Activated T-helper 1 cell treated with anti-CD3 and anti-CD28 coated beads, Interleukin-12 subunit alpha, Interleukin-12 subunit beta, Interleukin-2, Interleukin-4 antibody, amounts not matched to agents 30 ng/mL and 10 ng/mL and 1 ng/mL, durations not matched to agents 14 hours and 24 hours and 36 hours (primary cell): ENCODE measurements at regions of chr17 and their contacts with region 1.

Region 1: GRCh38 chr17:21551081-21551881 is 141.0 kb upstream of the KCNJ18 start:
- DNase-seq: peak; percentile 66
- H3K4me3 Mint-ChIP-seq: peak overlapping the region; percentile 77
- H3K27ac Mint-ChIP-seq: peak overlapping the region; percentile 64
- H3K4me1 Mint-ChIP-seq: peaks cover 27% of the 10 kb centered on the region
- H3K27me3 Mint-ChIP-seq: peaks cover 29% of the 10 kb centered on the region

Region 2: GRCh38 chr17:21034340-21035235 is 516.7 kb before region 1 on chr17:
- intact Hi-C with region 1: loop called (anchors 2 kb)
- DNase-seq: peak; percentile 46
- H3K4me3 Mint-ChIP-seq: peak overlapping the region; percentile 80
- H3K27ac Mint-ChIP-seq: peak overlapping the region; percentile 93
- H3K4me1 Mint-ChIP-seq: peaks cover 72% of the 10 kb centered on the region
- H3K27me3 Mint-ChIP-seq: no peaks in the 10 kb centered on the region

Region 3: DNA sequence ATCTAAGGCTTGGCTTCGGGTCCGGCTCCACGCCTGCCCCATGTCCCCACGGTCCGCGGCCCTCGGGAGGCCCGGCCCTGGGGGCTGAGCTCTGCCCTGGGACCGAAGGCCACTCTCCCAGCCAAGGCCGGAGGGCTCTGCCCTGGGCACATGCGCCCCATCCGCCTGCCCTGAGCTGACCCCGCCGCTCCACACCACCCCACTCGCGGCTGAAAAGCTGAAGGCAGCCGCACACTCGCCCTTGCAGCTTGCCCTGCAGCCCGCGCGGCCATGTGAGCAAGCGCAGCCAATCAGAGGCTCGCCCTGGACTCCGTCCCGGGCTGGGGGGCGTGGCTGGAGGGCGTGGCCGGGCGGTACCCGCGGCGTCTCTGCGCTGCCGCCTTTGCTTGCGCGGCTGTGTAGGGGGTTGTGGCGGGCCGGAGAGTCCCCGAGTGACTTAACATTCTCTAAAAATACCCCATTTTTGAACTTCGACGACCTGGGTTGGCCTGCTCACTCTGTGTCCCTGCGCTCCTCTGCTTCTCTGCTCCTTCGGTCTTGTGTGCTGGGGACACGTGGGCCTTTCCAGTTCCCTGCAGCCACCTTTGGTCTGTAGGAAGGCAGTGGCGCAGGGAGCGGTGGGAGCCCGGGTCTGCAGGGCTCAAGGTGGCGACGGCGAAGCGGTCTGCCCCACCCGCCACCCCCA is 275.6 kb before region 1 on chr17:
- intact Hi-C with region 1: loop called (anchors 2 kb)
- DNase-seq: peak; percentile 92
- H3K4me3 Mint-ChIP-seq: peak overlapping the region; percentile 95
- H3K27ac Mint-ChIP-seq: peak overlapping the region; percentile 63
- H3K4me1 Mint-ChIP-seq: peaks cover 43% of the 10 kb centered on the region
- H3K27me3 Mint-ChIP-seq: peaks cover 3% of the 10 kb centered on the region

Region 4: DNA sequence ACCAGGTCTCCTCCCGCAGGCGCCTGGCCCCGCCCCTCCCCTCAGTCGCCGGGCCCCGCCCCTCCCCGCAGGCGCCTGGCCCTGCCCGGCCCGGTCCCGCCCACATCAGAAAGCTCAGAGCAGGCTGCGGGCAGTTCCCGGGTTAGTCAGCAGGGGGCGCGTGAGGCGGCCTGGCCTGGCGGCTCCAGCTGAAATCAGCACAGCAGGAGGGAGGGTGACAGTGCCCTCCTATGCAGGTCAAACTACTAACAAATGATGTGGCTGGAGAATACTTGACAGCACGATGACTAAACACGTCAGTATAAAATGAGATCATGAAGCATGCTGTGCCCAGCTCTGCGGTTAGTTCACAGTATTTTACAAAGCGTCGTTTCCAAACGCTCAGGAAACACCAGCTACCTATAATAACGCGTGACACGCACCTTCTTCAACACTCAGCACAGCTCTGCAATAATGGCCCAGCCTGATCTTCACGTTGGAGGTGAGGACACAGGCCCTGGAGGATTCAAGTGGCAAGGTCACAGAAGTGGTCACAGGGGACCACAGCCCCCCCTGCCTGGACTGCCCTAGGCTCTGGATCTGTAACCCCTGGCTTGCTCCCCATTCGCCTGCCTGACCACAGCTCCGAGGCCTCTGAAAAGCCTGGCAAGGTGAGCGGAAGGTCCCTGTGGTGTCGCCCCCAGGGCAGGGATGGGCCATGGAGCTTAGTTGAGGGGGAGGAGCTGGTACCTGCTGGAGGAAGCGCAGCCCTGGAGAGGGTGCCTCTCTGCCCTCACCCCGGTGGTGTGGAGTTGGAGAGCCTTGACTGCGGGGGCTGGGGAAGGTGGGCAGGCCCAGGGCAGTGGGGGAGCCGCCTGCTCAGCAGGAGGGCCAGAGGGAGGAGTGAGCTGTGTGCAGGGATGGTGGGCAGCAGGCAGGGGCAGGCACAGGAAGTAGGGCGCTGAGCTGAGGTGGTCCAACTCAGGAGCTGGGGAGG is 93.9 kb before region 1 on chr17:
- intact Hi-C with region 1: loop called (anchors 1 kb)
- DNase-seq: peak; percentile 85
- H3K4me3 Mint-ChIP-seq: no peak overlapping the region
- H3K27ac Mint-ChIP-seq: peak overlapping the region; percentile 64
- H3K4me1 Mint-ChIP-seq: peaks cover 10% of the 10 kb centered on the region
- H3K27me3 Mint-ChIP-seq: peaks cover 25% of the 10 kb centered on the region

Region 5: DNA sequence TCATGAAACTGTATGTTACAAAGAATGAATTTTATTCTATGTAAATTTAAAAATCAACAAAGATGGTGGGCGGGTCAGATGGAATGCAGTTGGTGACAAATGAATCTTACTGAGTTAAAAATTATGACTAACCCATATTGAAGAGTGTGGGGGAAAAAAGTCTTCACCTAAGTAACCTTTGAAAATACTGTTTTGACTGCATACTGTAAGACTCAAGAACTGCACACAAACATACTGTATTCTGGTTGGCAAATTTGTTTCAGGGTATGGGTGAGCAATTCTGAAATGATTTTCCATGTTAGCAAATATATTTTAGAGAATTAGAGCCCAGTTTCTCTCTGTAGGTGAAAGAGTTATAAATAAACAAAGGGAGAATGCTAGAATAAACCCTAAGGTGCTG is 12.7 kb before region 1 on chr17:
- intact Hi-C with region 1: loop called (anchors 1 kb)
- DNase-seq: no peak
- H3K4me3 Mint-ChIP-seq: no peak overlapping the region
- H3K27ac Mint-ChIP-seq: peak overlapping the region; percentile 59
- H3K4me1 Mint-ChIP-seq: peaks cover 16% of the 10 kb centered on the region
- H3K27me3 Mint-ChIP-seq: no peaks in the 10 kb centered on the region

Region 6: GRCh38 chr17:21842332-21843317 is 291.3 kb after region 1 on chr17:
- intact Hi-C with region 1: no loop called
- DNase-seq: no peak
- H3K4me3 Mint-ChIP-seq: no peak overlapping the region
- H3K27ac Mint-ChIP-seq: no peak overlapping the region
- H3K4me1 Mint-ChIP-seq: no peaks in the 10 kb centered on the region
- H3K27me3 Mint-ChIP-seq: peaks cover 2% of the 10 kb centered on the region